Activated T-helper 2 cell treated with anti-CD3 and anti-CD28 coated beads, Interferon-gamma antibody, Interleukin-2, Interleukin-4, amounts not matched to agents 10 μg/mL and 5 μg/mL and 100 μg/mL, durations not matched to agents 14 hours and 24 hours and 36 hours (primary cell): ENCODE measurements at regions of chr6 and their contacts with region 1.

Region 1: GRCh38 chr6:106444777-106445507 is 84.4 kb downstream of the CRYBG1 start:
- DNase-seq: peak; percentile 18
- H3K4me3 Mint-ChIP-seq: no peak overlapping the region
- H3K27ac Mint-ChIP-seq: no peak overlapping the region
- H3K4me1 Mint-ChIP-seq: peaks cover 22% of the 10 kb centered on the region
- H3K27me3 Mint-ChIP-seq: peaks cover 37% of the 10 kb centered on the region

Region 2: DNA sequence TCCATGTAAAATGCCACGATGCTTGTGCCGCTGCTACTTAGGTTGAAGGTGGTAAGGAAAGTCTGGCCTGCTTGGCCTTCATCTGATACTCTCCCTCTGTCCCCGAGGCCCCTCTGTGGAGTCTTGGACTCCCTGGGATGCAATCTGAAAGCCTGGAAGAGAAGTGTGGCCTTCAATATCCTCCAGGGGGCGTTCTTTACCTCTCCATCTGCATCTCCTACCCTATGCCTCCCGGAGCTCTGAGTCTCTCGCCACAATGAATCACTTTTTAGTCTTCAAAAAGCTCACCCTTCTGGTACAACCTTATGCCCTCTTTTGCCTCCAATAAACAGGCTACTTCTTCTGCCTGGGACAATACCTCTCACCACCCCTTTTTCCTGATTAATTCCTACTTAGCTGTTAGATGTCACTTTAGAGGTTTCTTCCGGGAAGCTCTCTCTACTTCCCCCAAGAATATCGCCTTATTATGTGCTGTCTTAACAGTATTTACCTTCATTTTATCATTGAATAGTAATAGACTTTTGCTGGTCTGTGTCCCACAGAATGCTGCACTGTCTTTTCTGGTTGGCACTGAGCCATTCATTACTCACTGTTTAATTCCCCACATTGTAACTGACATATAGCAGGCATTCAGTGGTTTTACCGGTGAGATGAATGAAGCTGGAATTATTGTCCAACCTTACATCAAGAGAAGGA is 105.5 kb before region 1 on chr6:
- intact Hi-C with region 1: loop called (anchors 1 kb)
- DNase-seq: peak; percentile 40
- H3K4me3 Mint-ChIP-seq: no peak overlapping the region
- H3K27ac Mint-ChIP-seq: no peak overlapping the region
- H3K4me1 Mint-ChIP-seq: peaks cover 8% of the 10 kb centered on the region
- H3K27me3 Mint-ChIP-seq: peaks cover 22% of the 10 kb centered on the region

Region 3: GRCh38 chr6:106473812-106474211 is 28.9 kb after region 1 on chr6:
- intact Hi-C with region 1: no loop called
- DNase-seq: no peak
- H3K4me3 Mint-ChIP-seq: no peak overlapping the region
- H3K27ac Mint-ChIP-seq: no peak overlapping the region
- H3K4me1 Mint-ChIP-seq: no peaks in the 10 kb centered on the region
- H3K27me3 Mint-ChIP-seq: peaks cover 3% of the 10 kb centered on the region

Region 4: GRCh38 chr6:106556368-106556960 is 111.5 kb after region 1 on chr6:
- intact Hi-C with region 1: loop called (anchors 2 kb)
- DNase-seq: no peak
- H3K4me3 Mint-ChIP-seq: no peak overlapping the region
- H3K27ac Mint-ChIP-seq: no peak overlapping the region
- H3K4me1 Mint-ChIP-seq: peaks cover 20% of the 10 kb centered on the region
- H3K27me3 Mint-ChIP-seq: no peaks in the 10 kb centered on the region

Region 5: GRCh38 chr6:106883808-106884262 is 438.9 kb after region 1 on chr6:
- intact Hi-C with region 1: loop called (anchors 5 kb)
- DNase-seq: no peak
- H3K4me3 Mint-ChIP-seq: no peak overlapping the region
- H3K27ac Mint-ChIP-seq: no peak overlapping the region
- H3K4me1 Mint-ChIP-seq: no peaks in the 10 kb centered on the region
- H3K27me3 Mint-ChIP-seq: peaks cover 30% of the 10 kb centered on the region